Left cardiac atrium (tissue), 4 donors: ENCODE measurements at regions of chr3 and their contacts with region 1.

Region 1: GRCh38 chr3:159252772-159253384 is 451.0 kb downstream of the MFSD1 start:
- DNase-seq: no peak
- ATAC-seq: no peak

Region 2: DNA sequence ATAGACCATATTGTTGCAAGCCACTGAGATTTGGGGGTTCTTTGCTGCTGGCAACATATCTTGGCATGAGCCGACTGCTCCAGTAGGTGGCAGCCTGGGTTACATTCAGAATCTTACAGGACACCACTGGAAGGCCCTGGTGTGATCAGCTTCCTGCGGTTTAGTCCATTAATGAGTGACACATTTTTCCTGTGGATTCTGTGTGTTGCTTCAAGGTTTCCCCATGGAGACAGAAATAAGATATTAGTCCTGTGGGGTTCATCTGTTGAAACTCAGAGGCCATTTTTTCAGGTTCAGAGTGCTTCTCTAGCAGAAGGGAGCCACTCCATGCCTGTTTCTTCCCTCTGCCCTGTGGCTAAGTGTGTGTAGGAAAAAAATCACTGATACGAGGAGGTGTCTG is 334.9 kb before region 1 on chr3:
- intact Hi-C with region 1: loop called (anchors 5 to 10 kb)
- DNase-seq: no peak
- ATAC-seq: peak in 1 of 2 donors; percentile 51

Region 3: GRCh38 chr3:159200176-159200575 is 52.7 kb before region 1 on chr3:
- intact Hi-C with region 1: no loop called
- DNase-seq: no peak
- ATAC-seq: no peak